ENCODE measurements at regions of chr19 and their contacts with region 1.

Region 1: DNA sequence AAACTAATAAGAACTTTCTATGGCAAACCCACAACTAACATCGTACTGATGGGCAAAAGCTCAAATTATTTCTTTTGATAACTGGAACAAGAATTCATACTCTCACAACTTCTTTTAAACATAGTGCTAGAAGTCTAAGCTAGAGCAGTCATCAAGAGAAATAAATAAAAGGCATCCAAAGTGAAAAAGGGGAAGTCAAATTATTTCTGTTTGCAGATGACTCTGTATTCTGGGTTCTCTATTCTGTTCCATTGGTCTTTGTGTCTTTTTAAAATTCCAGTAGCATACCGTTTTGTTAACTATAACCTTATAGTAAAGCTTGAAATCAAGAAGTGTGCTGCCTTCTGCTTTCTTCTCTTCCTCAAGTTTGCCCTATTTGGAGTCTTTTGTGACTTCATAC is 1215.9 kb downstream of the UQCRFS1 start:
- DNase-seq: no peak
- H3K4me3 ChIP-seq: no peak overlapping the region
- H3K27ac ChIP-seq: no peak overlapping the region
- H3K4me1 ChIP-seq: no peaks in the 10 kb centered on the region
- H3K27me3 ChIP-seq: no peaks in the 10 kb centered on the region
- CTCF ChIP-seq: no peak
- POLR2A ChIP-seq: no peak

Region 2: DNA sequence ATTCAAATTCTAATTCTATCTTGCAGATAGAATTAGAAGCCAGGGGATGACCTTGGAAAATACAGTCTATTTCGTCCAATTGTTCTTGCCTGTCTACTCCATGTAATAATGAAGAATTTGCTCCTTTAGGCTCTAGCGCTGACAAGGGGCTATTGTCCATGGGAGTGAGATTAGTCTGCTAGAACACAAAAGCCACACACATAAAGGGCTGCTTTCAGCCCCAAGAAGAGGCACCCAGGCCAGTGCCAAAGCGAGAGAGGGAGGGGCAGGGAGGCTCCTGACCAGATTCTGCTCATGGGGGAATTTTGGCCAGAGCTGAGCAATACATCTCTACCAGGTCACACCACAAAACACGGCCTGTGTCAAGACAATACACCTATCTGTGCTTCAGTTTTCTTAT is 91.0 kb before region 1 on chr19:
- intact Hi-C with region 1: no loop called
- DNase-seq: no peak
- H3K4me3 ChIP-seq: no peak overlapping the region
- H3K27ac ChIP-seq: no peak overlapping the region
- H3K4me1 ChIP-seq: no peaks in the 10 kb centered on the region
- H3K27me3 ChIP-seq: no peaks in the 10 kb centered on the region
- CTCF ChIP-seq: no peak
- POLR2A ChIP-seq: no peak

Region 3: DNA sequence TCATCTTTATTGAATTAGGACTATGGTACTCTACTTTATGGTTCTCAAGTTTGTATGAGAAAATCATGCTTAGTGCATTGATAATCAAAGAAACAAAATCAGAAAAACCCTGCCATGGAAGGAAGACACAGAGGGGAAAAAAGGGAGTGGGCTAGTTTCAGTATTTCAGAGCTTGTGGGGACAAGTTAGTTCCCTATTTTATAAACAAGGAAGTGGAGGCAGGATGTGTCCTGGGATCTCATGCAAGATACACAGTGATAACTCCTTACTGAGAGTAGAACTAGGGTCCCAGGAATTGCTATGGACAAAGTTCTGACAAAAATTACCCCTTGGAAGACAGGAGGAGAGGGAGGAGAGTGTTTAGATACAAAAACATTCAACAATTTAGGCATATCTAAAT is 61.4 kb before region 1 on chr19:
- intact Hi-C with region 1: no loop called
- DNase-seq: no peak
- H3K4me3 ChIP-seq: no peak overlapping the region
- H3K27ac ChIP-seq: no peak overlapping the region
- H3K4me1 ChIP-seq: no peaks in the 10 kb centered on the region
- H3K27me3 ChIP-seq: no peaks in the 10 kb centered on the region
- CTCF ChIP-seq: no peak
- POLR2A ChIP-seq: no peak

Region 4: DNA sequence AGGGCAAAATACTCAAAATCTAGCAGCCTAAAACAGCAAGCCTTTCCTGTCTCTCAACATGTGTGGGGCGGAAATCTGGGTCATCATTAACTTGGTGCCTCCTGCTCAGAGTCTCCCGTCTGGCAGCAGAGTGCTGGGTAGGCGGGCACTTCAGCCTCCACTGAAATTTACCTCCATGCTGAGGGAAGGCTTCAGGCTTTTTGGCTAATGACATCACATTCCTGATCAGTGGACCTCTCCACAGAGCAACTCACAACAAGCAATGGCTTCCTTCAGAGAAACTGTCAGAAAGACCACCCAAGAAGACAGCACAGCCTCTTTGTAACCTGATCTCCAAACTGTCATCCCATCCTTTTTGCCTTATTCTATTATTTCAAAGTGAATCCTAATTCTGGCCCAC is 106.9 kb after region 1 on chr19:
- intact Hi-C with region 1: no loop called
- DNase-seq: no peak
- H3K4me3 ChIP-seq: no peak overlapping the region
- H3K27ac ChIP-seq: no peak overlapping the region
- H3K4me1 ChIP-seq: no peaks in the 10 kb centered on the region
- H3K27me3 ChIP-seq: no peaks in the 10 kb centered on the region
- CTCF ChIP-seq: no peak
- POLR2A ChIP-seq: no peak

Region 5: GRCh38 chr19:28169168-28169887 is 172.3 kb after region 1 on chr19:
- intact Hi-C with region 1: loop called (anchors 5 kb)
- DNase-seq: no peak
- H3K4me3 ChIP-seq: no peak overlapping the region
- H3K27ac ChIP-seq: no peak overlapping the region
- H3K4me1 ChIP-seq: no peaks in the 10 kb centered on the region
- H3K27me3 ChIP-seq: no peaks in the 10 kb centered on the region
- CTCF ChIP-seq: no peak
- POLR2A ChIP-seq: no peak

Measured in uterus (tissue), 4 donors.